ENCODE measurements at regions of chr5 and their contacts with region 1.

Region 1: GRCh38 chr5:52989781-52990527 is 802 bp downstream of the ITGA2 start:
- DNase-seq: peak in 4 of 5 donors; percentile 15 to 29 (median 23)
- H3K4me3 ChIP-seq: peak overlapping the region; percentile 67 to 84
- H3K4me3 Mint-ChIP-seq: peak overlapping the region; percentile 76 to 88 (median 80)
- H3K27ac ChIP-seq: no peak overlapping the region
- H3K27ac Mint-ChIP-seq: peak overlapping the region in 1 of 7 donors; percentile 17
- H3K4me1 ChIP-seq: peaks cover 9% of the 10 kb centered on the region
- H3K4me1 Mint-ChIP-seq: peaks cover 3 to 20% (median 12%) of the 10 kb centered on the region in 4 donors
- H3K27me3 ChIP-seq: no peaks in the 10 kb centered on the region
- H3K27me3 Mint-ChIP-seq: peaks cover 0 to 1% of the 10 kb centered on the region in 2 donors

Region 2: GRCh38 chr5:52150501-52150900 is 839.5 kb before region 1 on chr5:
- CTCF ChIA-PET with region 1: no interaction called
- POLR2A ChIA-PET with region 1: no interaction called
- intact Hi-C with region 1: no loop called
- DNase-seq: no peak
- H3K4me3 ChIP-seq: no peak overlapping the region
- H3K4me3 Mint-ChIP-seq: no peak overlapping the region
- H3K27ac ChIP-seq: no peak overlapping the region
- H3K27ac Mint-ChIP-seq: no peak overlapping the region
- H3K4me1 ChIP-seq: no peaks in the 10 kb centered on the region
- H3K4me1 Mint-ChIP-seq: no peaks in the 10 kb centered on the region
- H3K27me3 ChIP-seq: no peaks in the 10 kb centered on the region
- H3K27me3 Mint-ChIP-seq: no peaks in the 10 kb centered on the region

Region 3: DNA sequence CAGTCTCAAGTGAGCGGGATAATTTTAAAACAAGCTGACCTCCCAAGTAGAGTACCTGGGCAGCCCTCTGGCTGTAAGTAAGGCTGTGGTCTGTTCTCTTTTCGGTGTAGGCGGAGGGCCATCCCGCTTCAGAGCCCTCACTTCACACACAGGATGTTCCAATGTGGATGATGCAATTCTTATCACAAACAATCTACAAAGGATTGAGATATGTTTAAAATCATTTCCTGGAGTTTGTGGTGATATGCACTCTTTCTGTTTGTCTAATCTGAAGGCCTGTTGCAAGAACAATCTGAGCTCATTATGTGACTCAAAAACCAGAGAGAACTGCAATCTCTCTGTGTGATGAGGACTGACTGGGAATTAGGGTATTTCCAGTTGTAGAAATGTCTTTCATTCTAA is 41.7 kb after region 1 on chr5:
- CTCF ChIA-PET with region 1: no interaction called
- POLR2A ChIA-PET with region 1: interaction called, 3 read pairs
- intact Hi-C with region 1: loop called (anchors 2 kb)
- DNase-seq: peak; percentile 7 to 60 (median 46)
- H3K4me3 ChIP-seq: no peak overlapping the region
- H3K4me3 Mint-ChIP-seq: peak overlapping the region in 2 of 8 donors; percentile 45
- H3K27ac ChIP-seq: no peak overlapping the region
- H3K27ac Mint-ChIP-seq: peak overlapping the region; percentile 5 to 90 (median 57)
- H3K4me1 ChIP-seq: peaks cover 16% of the 10 kb centered on the region
- H3K4me1 Mint-ChIP-seq: peaks cover 9 to 31% (median 14%) of the 10 kb centered on the region in 4 donors
- H3K27me3 ChIP-seq: no peaks in the 10 kb centered on the region
- H3K27me3 Mint-ChIP-seq: no peaks in the 10 kb centered on the region

Region 4: DNA sequence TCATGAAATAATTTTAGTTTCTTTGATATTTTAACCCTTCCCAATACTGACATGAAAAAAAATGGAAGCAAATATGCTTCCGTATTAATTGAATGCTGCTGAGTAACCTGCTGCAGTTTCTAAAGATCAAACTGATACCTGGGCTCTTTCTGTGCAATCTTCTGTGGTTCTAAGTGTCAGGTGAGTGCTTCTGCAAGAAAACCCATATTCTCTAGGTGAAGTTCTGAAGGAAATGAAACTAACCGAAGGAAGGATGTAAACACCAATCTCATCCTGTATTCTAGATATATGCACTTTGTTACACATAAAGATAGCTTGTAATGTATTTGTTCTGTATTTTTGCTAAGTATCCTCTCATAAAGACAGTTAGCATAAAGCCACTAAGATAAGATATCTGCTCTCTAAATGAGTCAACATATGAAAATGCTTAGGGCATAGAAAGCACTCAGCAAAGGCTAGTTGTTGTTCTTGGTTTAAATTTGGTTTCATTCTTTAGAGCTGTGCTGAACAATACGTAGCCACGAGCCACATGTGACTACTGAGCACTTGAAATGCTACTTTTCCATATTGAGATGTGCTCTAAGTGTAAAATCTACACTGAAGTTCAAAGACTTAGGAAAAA is 51.2 kb after region 1 on chr5:
- CTCF ChIA-PET with region 1: no interaction called
- POLR2A ChIA-PET with region 1: no interaction called
- intact Hi-C with region 1: loop called (anchors 2 kb)
- DNase-seq: peak in 4 of 5 donors; percentile 18 to 49 (median 38)
- H3K4me3 ChIP-seq: peak overlapping the region in 1 of 2 donors; percentile 17
- H3K4me3 Mint-ChIP-seq: peak overlapping the region; percentile 69 to 86 (median 78)
- H3K27ac ChIP-seq: peak overlapping the region; percentile 33
- H3K27ac Mint-ChIP-seq: peak overlapping the region; percentile 38 to 76 (median 53)
- H3K4me1 ChIP-seq: peaks cover 24% of the 10 kb centered on the region
- H3K4me1 Mint-ChIP-seq: peaks cover 14 to 30% (median 23%) of the 10 kb centered on the region in 4 donors
- H3K27me3 ChIP-seq: no peaks in the 10 kb centered on the region
- H3K27me3 Mint-ChIP-seq: no peaks in the 10 kb centered on the region

Region 5: GRCh38 chr5:53109443-53110127 is 119.6 kb after region 1 on chr5 and contains the start of gene MOCS2:
- CTCF ChIA-PET with region 1: no interaction called
- POLR2A ChIA-PET with region 1: no interaction called
- intact Hi-C with region 1: loop called (anchors 5 kb)
- DNase-seq: peak; percentile 86 to 93 (median 91)
- H3K4me3 ChIP-seq: peak within 1 kb of the TSS; percentile 82 to 97
- H3K4me3 Mint-ChIP-seq: peak within 1 kb of the TSS; percentile 90 to 98 (median 95)
- H3K27ac ChIP-seq: peak within 1 kb of the TSS; percentile 68
- H3K27ac Mint-ChIP-seq: peak within 1 kb of the TSS; percentile 75 to 97 (median 95)
- H3K4me1 ChIP-seq: peaks cover 34% of the 10 kb centered on the region
- H3K4me1 Mint-ChIP-seq: peaks cover 31 to 59% (median 40%) of the 10 kb centered on the region in 4 donors
- H3K27me3 ChIP-seq: no peaks in the 10 kb centered on the region
- H3K27me3 Mint-ChIP-seq: no peaks in the 10 kb centered on the region
- total RNA-seq, gene MOCS2: 23.1 to 26.6 TPM